Cardiac septum (tissue), 1 donor: ENCODE measurements at regions of chr2 and their contacts with region 1.

Region 1: GRCh38 chr2:26692279-26692896 is at the start of gene KCNK3:
- DNase-seq: no peak
- total RNA-seq, gene KCNK3: 0.70 TPM

Region 2: GRCh38 chr2:26727641-26728561 is 35.5 kb after region 1 on chr2:
- intact Hi-C with region 1: loop called (anchors 5 kb)
- DNase-seq: no peak